ENCODE measurements at regions of chr10 and their contacts with region 1.

Region 1: GRCh38 chr10:72719718-72720592 is 28.0 kb downstream of the MCU start:
- DNase-seq: no peak
- ATAC-seq: no peak
- H3K4me3 ChIP-seq: no peak overlapping the region
- H3K27ac ChIP-seq: no peak overlapping the region
- H3K4me1 ChIP-seq: no peaks in the 10 kb centered on the region
- H3K27me3 ChIP-seq: no peaks in the 10 kb centered on the region
- CTCF ChIP-seq: no peak

Region 2: DNA sequence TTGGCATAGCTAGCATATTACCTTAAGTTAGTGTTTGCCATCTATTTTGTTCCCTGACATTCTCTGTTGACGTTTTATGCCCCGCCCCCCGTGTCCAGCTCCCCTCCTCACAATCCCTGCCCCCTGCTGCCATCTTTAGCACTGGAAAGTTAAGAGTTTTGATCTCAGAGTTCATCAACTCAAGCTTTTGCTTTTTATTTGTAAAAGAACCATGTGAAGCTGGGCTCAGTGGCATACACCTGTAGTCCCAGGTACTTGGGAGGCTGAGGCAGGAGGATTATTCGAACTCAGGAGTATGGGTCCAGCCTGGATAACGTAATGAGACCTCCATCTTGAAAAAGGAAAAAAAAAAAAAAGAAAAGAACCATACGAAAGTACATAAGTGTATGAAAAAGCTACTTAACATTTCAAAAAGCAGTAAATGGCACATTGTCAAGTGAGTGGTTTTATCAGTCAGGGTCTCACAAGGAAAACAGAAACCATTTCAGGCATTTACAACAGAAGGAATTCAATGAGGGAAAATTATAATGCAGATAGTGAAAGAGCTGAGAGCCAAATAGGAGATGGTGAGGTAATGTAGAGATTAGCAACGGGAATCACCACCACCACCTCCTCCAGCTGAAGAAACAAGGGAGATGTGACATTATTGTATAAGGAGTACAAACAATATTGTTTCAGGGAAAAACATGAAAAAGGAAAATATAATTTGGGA is 36.9 kb after region 1 on chr10:
- CTCF ChIA-PET with region 1: no interaction called
- POLR2A ChIA-PET with region 1: no interaction called
- in situ Hi-C with region 1: no loop called
- intact Hi-C with region 1: no loop called
- DNase-seq: no peak
- ATAC-seq: no peak
- H3K4me3 ChIP-seq: no peak overlapping the region
- H3K27ac ChIP-seq: no peak overlapping the region
- H3K4me1 ChIP-seq: no peaks in the 10 kb centered on the region
- H3K27me3 ChIP-seq: no peaks in the 10 kb centered on the region
- CTCF ChIP-seq: no peak

Region 3: DNA sequence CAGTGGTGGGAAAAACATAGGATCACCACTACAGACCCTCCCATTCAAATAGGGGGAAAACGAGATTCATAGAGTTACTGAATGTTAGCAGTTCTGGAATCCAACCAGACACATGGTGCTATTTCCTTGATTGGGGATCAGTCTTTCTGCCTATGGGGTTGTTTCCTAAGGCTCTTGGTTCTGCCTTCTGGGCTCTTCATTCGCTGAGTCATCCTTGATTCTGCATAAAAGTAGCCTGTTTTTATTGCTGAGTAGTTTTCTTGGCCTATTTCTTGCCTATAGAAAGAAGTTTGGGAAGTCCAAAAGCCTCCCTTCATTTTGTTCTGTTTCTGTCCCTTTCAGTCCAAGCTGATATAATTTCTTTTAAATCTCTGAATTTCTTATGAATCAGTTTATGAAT is 74.3 kb after region 1 on chr10:
- CTCF ChIA-PET with region 1: no interaction called
- POLR2A ChIA-PET with region 1: no interaction called
- in situ Hi-C with region 1: loop called (anchors 5 kb)
- intact Hi-C with region 1: no loop called
- DNase-seq: no peak
- ATAC-seq: no peak
- H3K4me3 ChIP-seq: no peak overlapping the region
- H3K27ac ChIP-seq: no peak overlapping the region
- H3K4me1 ChIP-seq: no peaks in the 10 kb centered on the region; the same call in 1 of the 2 replicates
- H3K27me3 ChIP-seq: no peaks in the 10 kb centered on the region
- CTCF ChIP-seq: no peak

Measured in Panc1 (cell line).